Activated CD8-positive, alpha-beta T cell treated with anti-CD3 and anti-CD28 coated beads, Interleukin-2, amount 10 ng/mL, durations not matched to agents 7 days and 5 days (primary cell): ENCODE measurements at regions of chr1 and their contacts with region 1.

Region 1: DNA sequence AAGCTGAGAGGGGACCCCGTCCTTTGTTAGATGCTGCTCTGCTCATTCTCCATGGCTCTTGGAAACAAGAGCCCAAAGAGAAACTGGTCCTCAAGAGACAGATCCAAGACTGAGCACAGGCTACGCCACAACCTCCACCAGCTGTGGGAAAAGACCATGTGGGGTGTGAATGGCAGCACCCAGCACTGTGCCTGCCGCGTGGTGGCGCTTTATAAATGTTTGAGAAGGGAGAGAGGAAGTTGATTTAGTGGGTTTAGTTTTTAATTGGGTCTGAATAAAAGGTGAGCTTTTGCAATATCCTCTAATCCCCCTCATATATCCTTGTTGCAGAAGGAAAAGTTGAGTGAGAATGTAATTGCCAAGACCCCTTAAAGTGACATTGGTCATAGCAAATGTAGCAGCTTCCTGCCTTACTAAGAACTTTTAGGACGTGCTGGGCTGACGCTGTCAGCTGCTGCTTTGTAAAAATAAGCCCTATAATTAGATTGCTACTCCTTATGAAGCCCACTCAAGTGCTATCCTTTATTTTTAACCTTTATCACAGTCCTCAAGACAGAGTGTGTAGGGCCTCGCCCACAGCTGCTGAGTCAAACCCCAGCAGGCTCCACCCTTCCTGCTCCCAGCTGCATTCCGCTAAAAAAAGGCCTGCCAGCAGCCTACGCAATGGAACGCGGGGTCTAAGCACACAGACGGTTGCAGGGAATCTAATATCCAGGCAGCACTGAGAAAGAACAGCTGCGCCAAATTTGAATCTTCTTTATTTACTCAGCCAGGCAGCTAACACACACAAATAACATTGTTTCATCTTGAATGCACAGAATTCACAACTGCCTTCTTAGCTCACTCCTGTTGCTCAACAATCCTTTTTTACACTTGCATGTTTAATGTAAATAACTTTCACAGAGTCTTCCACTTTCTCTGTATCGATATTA is 47.4 kb upstream of the PRDX6 start:
- DNase-seq: peak; percentile 80
- ATAC-seq: peak; percentile 88
- H3K4me3 Mint-ChIP-seq: peak overlapping the region; percentile 60
- H3K27ac Mint-ChIP-seq: peak overlapping the region; percentile 86
- H3K4me1 Mint-ChIP-seq: peaks cover 31% of the 10 kb centered on the region
- H3K27me3 Mint-ChIP-seq: no peaks in the 10 kb centered on the region

Region 2: GRCh38 chr1:173392895-173393658 is 36.7 kb before region 1 on chr1:
- CTCF ChIA-PET with region 1: no interaction called
- POLR2A ChIA-PET with region 1: no interaction called
- DNase-seq: no peak
- ATAC-seq: no peak
- H3K4me3 Mint-ChIP-seq: no peak overlapping the region
- H3K27ac Mint-ChIP-seq: no peak overlapping the region
- H3K4me1 Mint-ChIP-seq: no peaks in the 10 kb centered on the region
- H3K27me3 Mint-ChIP-seq: no peaks in the 10 kb centered on the region

Region 3: DNA sequence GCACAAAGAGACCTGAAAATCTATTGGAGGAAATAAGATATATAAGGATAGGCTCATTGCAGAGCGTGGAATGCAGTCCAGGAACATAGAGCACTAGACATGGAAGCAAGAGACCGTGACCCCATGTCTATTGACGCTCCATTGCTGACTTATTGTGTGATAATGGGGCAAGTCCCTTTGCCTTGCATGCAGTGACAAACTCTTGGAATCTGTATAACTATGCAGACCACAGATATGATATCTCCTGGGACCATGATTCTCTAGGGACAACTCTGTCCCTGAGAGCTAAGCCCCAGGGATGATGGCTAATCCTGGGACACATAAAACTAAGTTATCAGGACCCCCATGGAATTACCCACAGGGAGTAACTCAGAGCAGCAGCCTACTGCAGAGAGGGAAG is 25.7 kb before region 1 on chr1:
- CTCF ChIA-PET with region 1: no interaction called
- POLR2A ChIA-PET with region 1: no interaction called
- DNase-seq: no peak
- ATAC-seq: no peak
- H3K4me3 Mint-ChIP-seq: no peak overlapping the region
- H3K27ac Mint-ChIP-seq: no peak overlapping the region
- H3K4me1 Mint-ChIP-seq: peaks cover 24% of the 10 kb centered on the region
- H3K27me3 Mint-ChIP-seq: no peaks in the 10 kb centered on the region

Region 4: GRCh38 chr1:173414136-173414535 is 15.6 kb before region 1 on chr1:
- CTCF ChIA-PET with region 1: interaction called, 29 read pairs
- POLR2A ChIA-PET with region 1: no interaction called
- DNase-seq: no peak
- ATAC-seq: no peak
- H3K4me3 Mint-ChIP-seq: no peak overlapping the region
- H3K27ac Mint-ChIP-seq: no peak overlapping the region
- H3K4me1 Mint-ChIP-seq: peaks cover 36% of the 10 kb centered on the region
- H3K27me3 Mint-ChIP-seq: no peaks in the 10 kb centered on the region

Region 5: GRCh38 chr1:173476664-173477285 is 47.0 kb after region 1 on chr1:
- CTCF ChIA-PET with region 1: interaction called, 35 read pairs
- POLR2A ChIA-PET with region 1: interaction called, 8 read pairs
- DNase-seq: peak; percentile 83
- ATAC-seq: peak; percentile 89
- H3K4me3 Mint-ChIP-seq: peak overlapping the region; percentile 93
- H3K27ac Mint-ChIP-seq: peak overlapping the region; percentile 98
- H3K4me1 Mint-ChIP-seq: peaks cover 56% of the 10 kb centered on the region
- H3K27me3 Mint-ChIP-seq: no peaks in the 10 kb centered on the region

Region 6: DNA sequence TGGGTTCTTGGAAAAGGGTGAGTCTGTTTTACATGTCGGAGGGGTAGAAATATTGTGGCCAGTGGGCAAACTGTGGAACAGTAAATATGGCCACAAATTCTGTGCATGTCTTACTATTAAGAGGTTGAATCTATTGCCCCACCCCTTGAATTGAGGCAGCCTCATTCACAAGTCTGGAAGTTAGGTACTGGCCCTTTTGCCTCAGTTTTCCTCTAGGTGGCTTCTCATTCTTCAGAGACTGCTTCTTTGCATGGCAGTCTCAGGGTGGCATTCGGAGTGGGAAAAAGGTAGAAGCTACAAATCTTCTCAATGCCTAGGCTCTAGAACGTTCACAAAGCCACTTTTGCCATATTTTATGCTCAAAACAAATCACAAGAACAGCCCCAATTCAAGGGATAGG is 116.0 kb after region 1 on chr1:
- CTCF ChIA-PET with region 1: no interaction called
- POLR2A ChIA-PET with region 1: no interaction called
- DNase-seq: no peak
- ATAC-seq: no peak
- H3K4me3 Mint-ChIP-seq: no peak overlapping the region
- H3K27ac Mint-ChIP-seq: no peak overlapping the region
- H3K4me1 Mint-ChIP-seq: peaks cover 12% of the 10 kb centered on the region
- H3K27me3 Mint-ChIP-seq: no peaks in the 10 kb centered on the region

Region 7: GRCh38 chr1:173714759-173715537 is 285.2 kb after region 1 on chr1 and contains the start of gene KLHL20:
- CTCF ChIA-PET with region 1: interaction called, 38 read pairs
- POLR2A ChIA-PET with region 1: interaction called, 6 read pairs
- DNase-seq: peak; percentile 92
- ATAC-seq: peak; percentile 99
- H3K4me3 Mint-ChIP-seq: peak within 1 kb of the TSS; percentile 90
- H3K27ac Mint-ChIP-seq: peak within 1 kb of the TSS; percentile 96
- H3K4me1 Mint-ChIP-seq: peaks cover 24% of the 10 kb centered on the region
- H3K27me3 Mint-ChIP-seq: peaks cover 15% of the 10 kb centered on the region
- total RNA-seq, gene KLHL20: 18.3 to 22.3 TPM

Region 8: GRCh38 chr1:173867753-173868265 is 438.1 kb after region 1 on chr1 and contains the start of gene GAS5:
- CTCF ChIA-PET with region 1: interaction called, 12 read pairs
- POLR2A ChIA-PET with region 1: no interaction called
- DNase-seq: peak; percentile 100
- ATAC-seq: peak; percentile 80
- H3K4me3 Mint-ChIP-seq: peak within 1 kb of the TSS; percentile 89
- H3K27ac Mint-ChIP-seq: peak within 1 kb of the TSS; percentile 94
- H3K4me1 Mint-ChIP-seq: peaks cover 66% of the 10 kb centered on the region
- H3K27me3 Mint-ChIP-seq: no peaks in the 10 kb centered on the region
- total RNA-seq, gene GAS5: 356 to 367 TPM